CD4-positive, alpha-beta T cell (primary cell): ENCODE measurements at regions of chr19 and their contacts with region 1.

Region 1: GRCh38 chr19:41872775-41873647 is 4.1 kb upstream of the CD79A start:
- DNase-seq: peak; percentile 55 to 82 (median 66)
- ATAC-seq: no peak
- H3K4me3 ChIP-seq: no peak overlapping the region
- H3K4me3 Mint-ChIP-seq: peak overlapping the region; percentile 71
- H3K27ac ChIP-seq: peak overlapping the region; percentile 66 to 67
- H3K27ac Mint-ChIP-seq: peak overlapping the region; percentile 98
- H3K4me1 ChIP-seq: peaks cover 100% of the 10 kb centered on the region
- H3K4me1 Mint-ChIP-seq: peaks cover 80% of the 10 kb centered on the region
- H3K27me3 ChIP-seq: no peaks in the 10 kb centered on the region
- H3K27me3 Mint-ChIP-seq: no peaks in the 10 kb centered on the region
- CTCF ChIP-seq: peak; percentile 86

Region 2: GRCh38 chr19:41912899-41913537 is 40.0 kb after region 1 on chr19:
- CTCF ChIA-PET with region 1: interaction called, 4 read pairs
- POLR2A ChIA-PET with region 1: interaction called, 27 read pairs
- intact Hi-C with region 1: no loop called
- DNase-seq: peak in 3 of 14 experiments; percentile 50 to 58 (median 55)
- ATAC-seq: peak; percentile 35
- H3K4me3 ChIP-seq: no peak overlapping the region
- H3K4me3 Mint-ChIP-seq: no peak overlapping the region
- H3K27ac ChIP-seq: no peak overlapping the region
- H3K27ac Mint-ChIP-seq: peak overlapping the region; percentile 87
- H3K4me1 ChIP-seq: peaks cover 68% of the 10 kb centered on the region
- H3K4me1 Mint-ChIP-seq: peaks cover 37% of the 10 kb centered on the region
- H3K27me3 ChIP-seq: peaks cover 38 to 42% of the 10 kb centered on the region in 2 experiments
- H3K27me3 Mint-ChIP-seq: peaks cover 10% of the 10 kb centered on the region
- CTCF ChIP-seq: no peak

Region 3: GRCh38 chr19:41934849-41935374 is 61.9 kb after region 1 on chr19:
- CTCF ChIA-PET with region 1: interaction called, 9 read pairs
- POLR2A ChIA-PET with region 1: interaction called, 7 read pairs
- intact Hi-C with region 1: loop called (anchors 1 to 5 kb)
- DNase-seq: peak; percentile 65 to 88 (median 74)
- ATAC-seq: peak; percentile 63
- H3K4me3 ChIP-seq: no peak overlapping the region
- H3K4me3 Mint-ChIP-seq: peak overlapping the region; percentile 40
- H3K27ac ChIP-seq: no peak overlapping the region
- H3K27ac Mint-ChIP-seq: peak overlapping the region; percentile 73
- H3K4me1 ChIP-seq: peaks cover 49% of the 10 kb centered on the region
- H3K4me1 Mint-ChIP-seq: peaks cover 56% of the 10 kb centered on the region
- H3K27me3 ChIP-seq: no peaks in the 10 kb centered on the region
- H3K27me3 Mint-ChIP-seq: no peaks in the 10 kb centered on the region
- CTCF ChIP-seq: peak; percentile 96

Region 4: GRCh38 chr19:41951686-41952172 is 78.7 kb after region 1 on chr19:
- CTCF ChIA-PET with region 1: interaction called, 22 read pairs
- POLR2A ChIA-PET with region 1: interaction called, 4 read pairs
- intact Hi-C with region 1: loop called (anchors 1 kb)
- DNase-seq: peak; percentile 76 to 95 (median 88)
- ATAC-seq: peak; percentile 95
- H3K4me3 ChIP-seq: no peak overlapping the region
- H3K4me3 Mint-ChIP-seq: peak overlapping the region; percentile 61
- H3K27ac ChIP-seq: no peak overlapping the region
- H3K27ac Mint-ChIP-seq: peak overlapping the region; percentile 48
- H3K4me1 ChIP-seq: peaks cover 15% of the 10 kb centered on the region
- H3K4me1 Mint-ChIP-seq: peaks cover 20% of the 10 kb centered on the region
- H3K27me3 ChIP-seq: no peaks in the 10 kb centered on the region
- H3K27me3 Mint-ChIP-seq: no peaks in the 10 kb centered on the region
- CTCF ChIP-seq: peak; percentile 99